PC-9 (cell line): ENCODE measurements at regions of chr1 and their contacts with region 1.

Region 1: DNA sequence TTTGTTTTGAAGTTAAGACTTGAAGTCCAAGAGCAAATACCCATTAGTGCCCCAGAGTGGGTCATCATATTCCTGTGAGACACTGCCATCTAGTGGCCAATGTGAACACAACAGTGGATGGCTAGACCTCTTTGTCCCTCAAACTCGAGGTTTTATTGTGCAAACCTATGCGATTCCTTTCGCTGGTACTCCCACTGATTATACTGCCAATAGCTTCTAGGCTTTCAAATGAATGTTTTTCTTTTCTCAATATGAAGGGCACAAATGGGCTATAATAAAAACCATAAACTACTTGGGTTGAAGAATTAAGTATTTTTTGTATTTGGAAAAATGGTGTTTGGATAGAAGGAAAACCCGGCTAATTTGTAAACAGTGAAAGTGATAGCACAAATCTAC is 100.4 kb upstream of the ZNF281 start:
- DNase-seq: peak; percentile 64 to 68
- H3K4me3 ChIP-seq: no peak overlapping the region
- H3K27ac ChIP-seq: no peak overlapping the region
- H3K4me1 ChIP-seq: no peaks in the 10 kb centered on the region
- H3K27me3 ChIP-seq: no peaks in the 10 kb centered on the region
- CTCF ChIP-seq: peak; percentile 96

Region 2: GRCh38 chr1:198771563-198772153 is 1738.6 kb before region 1 on chr1:
- CTCF ChIA-PET with region 1: no interaction called
- POLR2A ChIA-PET with region 1: no interaction called
- intact Hi-C with region 1: loop called (anchors 5 kb)
- DNase-seq: no peak
- H3K4me3 ChIP-seq: no peak overlapping the region
- H3K27ac ChIP-seq: no peak overlapping the region
- H3K4me1 ChIP-seq: no peaks in the 10 kb centered on the region
- H3K27me3 ChIP-seq: no peaks in the 10 kb centered on the region
- CTCF ChIP-seq: peak; percentile 66

Region 3: DNA sequence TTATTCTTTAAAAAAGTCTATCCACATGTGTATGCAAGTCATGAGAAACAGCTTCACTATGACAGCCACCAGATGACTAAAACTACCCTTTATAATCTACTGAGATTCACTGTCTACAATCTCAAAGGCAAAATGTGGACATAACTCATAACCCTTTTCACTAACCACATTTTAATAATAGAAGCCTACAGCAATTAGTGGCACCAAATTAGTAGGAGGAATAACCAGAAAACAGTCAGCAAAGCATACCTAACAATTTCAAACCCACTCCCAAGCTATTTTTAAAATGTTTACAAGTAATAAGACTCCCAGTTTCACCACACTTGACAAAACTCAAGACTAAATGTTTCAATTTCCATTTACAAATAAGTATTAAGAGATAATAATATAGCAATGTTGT is 1428.5 kb before region 1 on chr1:
- CTCF ChIA-PET with region 1: no interaction called
- POLR2A ChIA-PET with region 1: no interaction called
- intact Hi-C with region 1: no loop called
- DNase-seq: no peak
- H3K4me3 ChIP-seq: no peak overlapping the region
- H3K27ac ChIP-seq: no peak overlapping the region
- H3K4me1 ChIP-seq: no peaks in the 10 kb centered on the region
- H3K27me3 ChIP-seq: no peaks in the 10 kb centered on the region
- CTCF ChIP-seq: no peak

Region 4: GRCh38 chr1:199545780-199546179 is 964.4 kb before region 1 on chr1:
- CTCF ChIA-PET with region 1: no interaction called
- POLR2A ChIA-PET with region 1: no interaction called
- intact Hi-C with region 1: loop called (anchors 2 kb)
- DNase-seq: peak; percentile 30 to 79
- H3K4me3 ChIP-seq: no peak overlapping the region
- H3K27ac ChIP-seq: no peak overlapping the region
- H3K4me1 ChIP-seq: no peaks in the 10 kb centered on the region
- H3K27me3 ChIP-seq: no peaks in the 10 kb centered on the region
- CTCF ChIP-seq: peak; percentile 61

Region 5: DNA sequence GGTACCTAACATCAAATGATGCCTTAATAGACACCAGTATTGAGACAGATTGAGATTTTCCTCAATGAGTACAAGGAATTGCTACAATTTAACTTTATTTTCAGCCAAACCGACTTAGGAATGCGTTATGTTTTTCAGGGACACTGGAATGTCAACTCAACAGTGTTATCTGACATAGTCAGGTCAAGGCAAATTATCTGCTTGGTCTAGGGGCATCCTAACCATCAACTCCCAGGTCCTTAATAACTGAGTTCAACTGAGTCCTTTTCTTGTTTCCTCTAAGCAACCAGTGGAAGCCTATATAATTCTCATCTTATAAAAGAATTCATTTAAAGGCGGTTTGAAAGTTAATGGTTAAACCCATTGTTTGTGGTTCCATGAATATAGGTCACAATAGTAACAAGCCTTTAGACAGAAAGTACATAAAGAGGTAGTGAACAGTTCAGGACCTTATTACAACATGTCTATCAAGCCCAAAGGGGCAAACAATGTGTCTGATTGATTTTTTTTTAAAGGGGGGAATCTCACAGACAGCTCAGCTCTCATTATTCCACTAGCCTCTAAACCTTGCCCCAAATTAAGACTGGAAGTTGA is 515.0 kb before region 1 on chr1:
- CTCF ChIA-PET with region 1: interaction called, 13 read pairs
- POLR2A ChIA-PET with region 1: no interaction called
- intact Hi-C with region 1: no loop called
- DNase-seq: no peak
- H3K4me3 ChIP-seq: no peak overlapping the region
- H3K27ac ChIP-seq: no peak overlapping the region
- H3K4me1 ChIP-seq: no peaks in the 10 kb centered on the region
- H3K27me3 ChIP-seq: no peaks in the 10 kb centered on the region
- CTCF ChIP-seq: no peak

Region 6: GRCh38 chr1:200279810-200280411 is 230.3 kb before region 1 on chr1:
- CTCF ChIA-PET with region 1: interaction called, 12 read pairs
- POLR2A ChIA-PET with region 1: no interaction called
- intact Hi-C with region 1: no loop called
- DNase-seq: peak in 1 of 2 experiments; percentile 23
- H3K4me3 ChIP-seq: no peak overlapping the region
- H3K27ac ChIP-seq: no peak overlapping the region
- H3K4me1 ChIP-seq: no peaks in the 10 kb centered on the region
- H3K27me3 ChIP-seq: no peaks in the 10 kb centered on the region
- CTCF ChIP-seq: peak; percentile 75

Region 7: DNA sequence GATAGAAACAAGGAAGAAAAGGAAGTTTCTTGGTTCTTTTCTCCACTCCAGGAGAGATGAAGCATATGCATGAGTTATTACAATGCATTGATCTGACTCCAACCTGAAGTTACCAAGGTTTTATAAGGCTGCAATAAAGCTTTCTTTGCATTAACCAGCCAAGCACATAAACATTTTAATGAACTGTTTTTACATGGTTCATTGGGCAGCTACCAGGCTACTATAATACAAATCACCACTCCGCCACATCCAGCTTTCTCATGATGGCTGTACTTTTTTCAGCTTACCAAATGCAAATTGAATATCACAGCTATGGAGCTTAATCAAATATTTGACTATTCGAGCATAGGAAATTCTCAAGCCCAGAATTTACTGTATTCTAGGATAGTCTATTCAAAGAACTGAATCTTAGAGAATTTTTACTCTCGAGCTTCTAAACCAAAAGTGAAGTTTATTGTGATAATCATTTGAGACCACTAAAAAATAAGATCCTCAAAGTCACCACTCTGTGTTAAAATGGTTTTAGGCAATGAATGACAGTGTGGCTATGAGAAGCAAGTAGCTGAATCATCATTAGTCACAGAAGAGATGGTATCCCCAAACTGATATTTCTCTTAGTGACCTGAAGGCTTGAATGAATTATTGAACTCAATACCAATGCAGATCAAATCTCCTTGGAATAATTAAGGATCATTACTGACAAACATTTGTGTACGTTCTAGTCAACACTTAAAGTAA is 41.8 kb before region 1 on chr1:
- CTCF ChIA-PET with region 1: interaction called, 10 read pairs
- POLR2A ChIA-PET with region 1: no interaction called
- intact Hi-C with region 1: no loop called
- DNase-seq: peak in 1 of 2 experiments; percentile 43
- H3K4me3 ChIP-seq: no peak overlapping the region
- H3K27ac ChIP-seq: no peak overlapping the region
- H3K4me1 ChIP-seq: peaks cover 11% of the 10 kb centered on the region
- H3K27me3 ChIP-seq: no peaks in the 10 kb centered on the region
- CTCF ChIP-seq: no peak

Region 8: GRCh38 chr1:200699871-200700270 is 189.6 kb after region 1 on chr1:
- CTCF ChIA-PET with region 1: no interaction called
- POLR2A ChIA-PET with region 1: no interaction called
- intact Hi-C with region 1: no loop called
- DNase-seq: no peak
- H3K4me3 ChIP-seq: no peak overlapping the region
- H3K27ac ChIP-seq: no peak overlapping the region
- H3K4me1 ChIP-seq: no peaks in the 10 kb centered on the region
- H3K27me3 ChIP-seq: no peaks in the 10 kb centered on the region
- CTCF ChIP-seq: no peak